Activated naive CD4-positive, alpha-beta T cell treated with anti-CD3 and anti-CD28 coated beads for 36 hours (primary cell): ENCODE measurements at regions of chr22 and their contacts with region 1.

Region 1: DNA sequence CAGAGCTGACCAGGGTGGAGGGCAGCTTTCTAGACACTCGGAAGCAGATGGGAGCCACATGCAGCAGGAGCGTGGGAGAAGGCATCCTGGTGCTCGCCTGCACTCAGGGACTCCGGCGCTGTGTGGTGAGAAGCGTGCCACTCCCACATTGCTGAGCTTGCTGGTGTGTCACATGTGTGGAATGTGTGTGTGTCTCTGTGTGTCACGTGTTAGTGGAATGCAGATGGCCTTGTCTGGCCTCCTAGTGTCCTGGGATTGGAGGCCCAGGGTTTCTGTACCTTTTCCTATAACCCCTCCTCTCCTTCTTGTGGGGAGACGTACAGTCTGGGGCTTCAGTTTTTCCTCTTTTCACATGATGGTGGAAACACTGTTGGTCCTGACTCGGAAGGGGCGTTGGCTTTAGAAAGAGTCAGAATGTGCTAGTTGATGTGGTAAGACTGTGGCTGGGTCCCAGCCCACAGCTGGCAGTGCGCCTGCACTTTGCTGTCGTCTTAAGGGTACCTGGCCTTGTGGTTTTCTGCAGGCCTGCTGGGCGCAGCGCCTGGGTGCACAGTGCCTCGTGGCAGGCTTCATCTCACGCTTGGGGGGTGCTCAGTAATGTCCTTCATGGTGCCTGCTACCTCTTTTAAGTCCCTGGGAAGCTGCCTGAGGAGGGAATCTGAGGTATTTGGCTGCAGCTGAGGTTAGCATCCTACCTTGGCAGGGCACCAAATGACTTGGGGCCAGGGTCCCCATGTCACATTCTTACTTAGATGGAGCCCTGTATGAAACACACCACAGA is 61.8 kb downstream of the MED15 start:
- DNase-seq: peak; percentile 62
- H3K4me3 Mint-ChIP-seq: no peak overlapping the region
- H3K27ac Mint-ChIP-seq: no peak overlapping the region
- H3K4me1 Mint-ChIP-seq: peaks cover 71% of the 10 kb centered on the region
- H3K27me3 Mint-ChIP-seq: no peaks in the 10 kb centered on the region

Region 2: DNA sequence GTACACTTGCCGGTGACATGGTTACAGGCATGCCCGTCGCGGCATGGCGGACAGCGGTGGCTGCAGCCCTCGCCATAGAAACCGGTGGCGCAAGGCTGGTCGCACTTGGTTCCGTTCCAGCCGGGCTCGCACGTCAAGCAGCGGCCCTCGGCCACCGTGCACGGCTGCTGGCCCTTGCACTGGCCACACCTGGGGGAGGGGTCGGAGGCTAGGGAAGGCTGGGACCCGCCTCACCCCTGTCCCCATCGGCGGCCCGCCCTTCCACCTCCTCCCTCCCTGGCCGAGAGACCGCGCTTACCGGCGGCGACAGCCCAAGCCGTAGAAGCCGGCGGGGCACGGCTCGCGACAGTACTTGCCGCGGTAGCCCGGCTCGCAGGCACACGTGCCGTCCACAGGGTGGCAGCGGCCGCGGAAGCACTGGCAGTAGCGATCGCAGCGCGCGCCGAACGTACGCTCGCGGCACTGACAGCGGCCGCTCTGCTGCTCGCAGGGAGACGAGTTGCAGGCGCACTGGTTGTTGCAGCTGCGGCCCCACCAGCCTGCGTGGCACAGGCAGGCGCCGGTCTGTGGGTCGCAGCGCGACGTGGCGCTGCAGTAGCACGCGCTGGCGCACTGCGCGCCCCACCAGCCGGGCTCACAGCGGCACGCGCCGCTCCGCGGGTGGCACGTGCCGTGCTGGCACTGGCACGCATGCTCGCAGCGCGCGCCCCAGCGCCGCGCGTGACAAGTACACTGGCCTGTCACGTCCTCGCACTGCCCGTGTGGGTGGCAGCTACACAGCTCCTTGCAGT is 138.3 kb before region 1 on chr22:
- CTCF ChIA-PET with region 1: no interaction called
- intact Hi-C with region 1: loop called (anchors 5 kb)
- DNase-seq: peak; percentile 59
- H3K4me3 Mint-ChIP-seq: peak overlapping the region; percentile 63
- H3K27ac Mint-ChIP-seq: no peak overlapping the region
- H3K4me1 Mint-ChIP-seq: peaks cover 18% of the 10 kb centered on the region
- H3K27me3 Mint-ChIP-seq: peaks cover 58% of the 10 kb centered on the region

Region 3: GRCh38 chr22:20507253-20508066 is 61.7 kb before region 1 on chr22 and contains the start of gene MED15:
- CTCF ChIA-PET with region 1: interaction called, 22 read pairs
- intact Hi-C with region 1: loop called (anchors 1 kb)
- DNase-seq: peak; percentile 94
- H3K4me3 Mint-ChIP-seq: peak within 1 kb of the TSS; percentile 98
- H3K27ac Mint-ChIP-seq: peak within 1 kb of the TSS; percentile 98
- H3K4me1 Mint-ChIP-seq: peaks cover 44% of the 10 kb centered on the region
- H3K27me3 Mint-ChIP-seq: no peaks in the 10 kb centered on the region
- total RNA-seq, gene MED15: 94.7 to 108 TPM

Region 4: GRCh38 chr22:20532256-20532993 is 36.8 kb before region 1 on chr22:
- CTCF ChIA-PET with region 1: interaction called, 16 read pairs
- intact Hi-C with region 1: no loop called
- DNase-seq: no peak
- H3K4me3 Mint-ChIP-seq: no peak overlapping the region
- H3K27ac Mint-ChIP-seq: no peak overlapping the region
- H3K4me1 Mint-ChIP-seq: peaks cover 61% of the 10 kb centered on the region
- H3K27me3 Mint-ChIP-seq: no peaks in the 10 kb centered on the region